WTC11 (cell line): ENCODE measurements at regions of chr17 and their contacts with region 1.

Region 1: DNA sequence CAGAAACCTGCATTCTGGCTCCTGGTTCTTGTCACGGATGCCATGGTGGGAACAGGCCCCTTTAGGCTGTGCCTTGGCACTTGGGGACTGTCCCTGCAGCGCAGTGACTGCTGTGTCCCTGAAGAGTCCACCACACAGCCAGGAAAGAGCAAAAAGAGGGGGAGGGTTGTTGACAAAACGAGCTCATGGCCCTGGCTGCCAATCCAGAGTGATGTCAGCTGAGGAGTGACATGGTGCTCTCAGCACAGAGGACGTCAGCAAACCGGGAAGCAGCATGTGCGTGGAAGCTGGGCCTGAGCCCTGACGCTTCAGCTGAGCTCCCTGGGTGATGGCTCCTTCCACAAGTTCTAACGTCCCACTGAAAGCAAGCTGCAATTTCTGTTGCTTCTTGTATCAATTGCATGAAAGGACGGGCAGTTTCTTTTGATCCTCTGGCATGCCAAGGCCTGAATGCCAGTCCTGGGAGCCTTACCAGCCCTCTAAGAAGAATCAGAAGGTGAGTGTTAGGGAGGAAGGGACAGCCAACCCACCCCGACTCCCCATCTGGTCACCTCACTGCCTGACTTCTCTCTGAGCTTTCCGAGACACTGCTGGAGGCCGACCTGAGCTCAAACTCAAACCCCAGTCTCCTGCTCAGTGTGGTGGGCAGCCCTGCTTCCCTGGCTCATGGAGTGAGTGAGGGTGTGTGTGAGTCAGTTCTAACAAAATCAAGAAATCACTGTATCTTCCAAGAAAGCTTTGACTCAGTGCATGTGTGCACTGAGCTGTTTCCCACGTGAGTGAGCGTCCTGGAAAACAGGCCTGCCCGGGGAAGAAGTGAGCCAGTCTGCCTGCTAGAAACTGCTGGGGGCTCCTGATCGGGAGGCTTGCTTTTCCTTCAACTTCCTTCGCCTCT is 14.7 kb upstream of the WNT3 start:
- DNase-seq: no peak
- ATAC-seq: no peak
- H3K4me3 Mint-ChIP-seq: no peak overlapping the region
- H3K27ac Mint-ChIP-seq: no peak overlapping the region
- H3K4me1 Mint-ChIP-seq: peaks cover 40% of the 10 kb centered on the region
- H3K27me3 Mint-ChIP-seq: peaks cover 34% of the 10 kb centered on the region
- CTCF ChIP-seq: no peak

Region 2: GRCh38 chr17:46783031-46783593 is 50.1 kb before region 1 on chr17:
- CTCF ChIA-PET with region 1: interaction called, 16 read pairs
- POLR2A ChIA-PET with region 1: no interaction called
- DNase-seq: no peak
- ATAC-seq: no peak
- H3K4me3 Mint-ChIP-seq: no peak overlapping the region
- H3K27ac Mint-ChIP-seq: no peak overlapping the region
- H3K4me1 Mint-ChIP-seq: peaks cover 21% of the 10 kb centered on the region
- H3K27me3 Mint-ChIP-seq: peaks cover 35% of the 10 kb centered on the region
- CTCF ChIP-seq: no peak

Region 3: GRCh38 chr17:46809110-46809571 is 24.1 kb before region 1 on chr17:
- CTCF ChIA-PET with region 1: interaction called, 10 read pairs
- POLR2A ChIA-PET with region 1: no interaction called
- DNase-seq: peak; percentile 55
- ATAC-seq: peak; percentile 88
- H3K4me3 Mint-ChIP-seq: no peak overlapping the region
- H3K27ac Mint-ChIP-seq: no peak overlapping the region
- H3K4me1 Mint-ChIP-seq: peaks cover 50% of the 10 kb centered on the region
- H3K27me3 Mint-ChIP-seq: no peaks in the 10 kb centered on the region; the same call in 1 of the 2 replicates
- CTCF ChIP-seq: no peak

Region 4: GRCh38 chr17:46822388-46822921 is 10.7 kb before region 1 on chr17:
- CTCF ChIA-PET with region 1: interaction called, 13 read pairs
- POLR2A ChIA-PET with region 1: no interaction called
- DNase-seq: peak; percentile 88
- ATAC-seq: peak; percentile 7
- H3K4me3 Mint-ChIP-seq: no peak overlapping the region
- H3K27ac Mint-ChIP-seq: no peak overlapping the region
- H3K4me1 Mint-ChIP-seq: peaks cover 27% of the 10 kb centered on the region
- H3K27me3 Mint-ChIP-seq: peaks cover 62% of the 10 kb centered on the region
- CTCF ChIP-seq: peak; percentile 97